Panc1 (cell line): ENCODE measurements at regions of chr3 and their contacts with region 1.

Region 1: GRCh38 chr3:177197041-177197727 is at the start of gene TBL1XR1:
- DNase-seq: peak; percentile 48
- ATAC-seq: peak; percentile 81
- H3K4me3 ChIP-seq: peak within 1 kb of the TSS; percentile 75 to 84
- H3K27ac ChIP-seq: peak within 1 kb of the TSS; percentile 100
- H3K4me1 ChIP-seq: peaks cover 42% of the 10 kb centered on the region
- H3K27me3 ChIP-seq: no peaks in the 10 kb centered on the region
- CTCF ChIP-seq: no peak
- total RNA-seq, gene TBL1XR1: 192 TPM

Region 2: GRCh38 chr3:177050501-177051237 is 146.5 kb before region 1 on chr3:
- CTCF ChIA-PET with region 1: no interaction called
- POLR2A ChIA-PET with region 1: interaction called, 3 read pairs
- in situ Hi-C with region 1: no loop called
- intact Hi-C with region 1: loop called (anchors 1 kb)
- DNase-seq: peak; percentile 30
- ATAC-seq: peak; percentile 84
- H3K4me3 ChIP-seq: no peak overlapping the region
- H3K27ac ChIP-seq: peak overlapping the region; percentile 85
- H3K4me1 ChIP-seq: peaks cover 34% of the 10 kb centered on the region
- H3K27me3 ChIP-seq: no peaks in the 10 kb centered on the region
- CTCF ChIP-seq: peak; percentile 69; the same call in 1 of the 2 replicates

Region 3: GRCh38 chr3:177597311-177598096 is 400.3 kb after region 1 on chr3:
- CTCF ChIA-PET with region 1: no interaction called
- POLR2A ChIA-PET with region 1: no interaction called
- in situ Hi-C with region 1: no loop called
- intact Hi-C with region 1: loop called (anchors 10 kb)
- DNase-seq: no peak
- ATAC-seq: no peak
- H3K4me3 ChIP-seq: no peak overlapping the region
- H3K27ac ChIP-seq: peak overlapping the region; percentile 78
- H3K4me1 ChIP-seq: peaks cover 37% of the 10 kb centered on the region
- H3K27me3 ChIP-seq: no peaks in the 10 kb centered on the region
- CTCF ChIP-seq: no peak